ENCODE measurements at regions of chr17 and their contacts with region 1.

Region 1: DNA sequence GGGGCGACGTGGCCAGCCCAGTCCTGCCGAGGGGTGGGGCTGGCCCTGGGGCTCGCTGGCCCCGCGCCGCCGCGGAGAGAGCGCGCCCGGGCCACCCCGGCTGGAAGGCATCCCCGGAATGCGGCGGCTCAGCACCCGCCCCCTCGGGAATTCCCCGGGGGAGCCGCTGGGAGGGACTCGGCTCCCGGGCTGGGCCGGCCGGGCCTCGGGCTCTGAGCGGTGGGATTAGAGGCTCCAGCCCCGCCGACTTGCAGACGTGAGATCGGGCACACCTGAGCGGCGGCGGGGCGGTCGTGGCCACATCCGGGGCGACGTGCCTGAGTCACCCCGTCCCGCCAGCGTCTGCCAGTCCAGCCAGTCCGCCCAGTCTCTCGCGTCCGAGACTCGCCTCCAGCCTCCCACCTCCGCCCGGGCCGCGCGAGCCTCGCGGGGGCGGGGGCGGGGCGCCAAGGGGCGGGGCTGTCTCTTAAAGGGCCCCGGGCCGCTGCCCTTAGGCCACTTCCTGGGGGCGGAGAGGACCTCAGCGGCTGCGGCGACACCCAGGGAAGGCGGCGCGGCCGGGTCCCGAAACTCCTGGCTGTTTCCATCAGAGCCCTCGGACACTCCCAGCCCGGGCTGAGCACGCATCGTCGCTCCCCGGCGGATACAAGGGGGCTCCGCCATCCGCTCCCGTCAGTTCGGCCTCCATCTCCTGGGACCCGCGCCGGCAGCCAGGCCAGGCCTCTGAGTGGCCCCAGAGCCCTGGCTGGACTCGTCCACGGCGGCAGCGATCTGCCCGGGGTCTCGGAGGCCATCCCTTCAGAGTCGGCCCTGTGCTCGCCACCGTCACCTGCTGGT is at the start of gene KCTD11:
- DNase-seq: peak; percentile 94
- H3K4me3 ChIP-seq: peak within 1 kb of the TSS; percentile 58 to 88 (median 74)
- H3K27ac ChIP-seq: peak within 1 kb of the TSS; percentile 86 to 94 (median 91)
- H3K4me1 ChIP-seq: peaks cover 32 to 92% (median 59%) of the 10 kb centered on the region in 6 donors
- H3K27me3 ChIP-seq: no peaks in the 10 kb centered on the region
- CTCF ChIP-seq: peak in 2 of 11 experiments; percentile 11 to 15
- POLR2A ChIP-seq: peak in 1 of 3 donors; percentile 6
- total RNA-seq, gene KCTD11: 7.7 to 10.0 (median 9.1) TPM

Region 2: GRCh38 chr17:7296189-7296902 is 55.5 kb before region 1 on chr17:
- intact Hi-C with region 1: loop called (anchors 10 kb)
- DNase-seq: peak; percentile 94
- H3K4me3 ChIP-seq: peak overlapping the region in 2 of 8 donors; percentile 37 to 52
- H3K27ac ChIP-seq: peak overlapping the region in 1 of 8 donors; percentile 7
- H3K4me1 ChIP-seq: peaks cover 17 to 40% (median 33%) of the 10 kb centered on the region in 6 donors
- H3K27me3 ChIP-seq: peaks cover 0 to 60% (median 38%) of the 10 kb centered on the region in 7 donors
- CTCF ChIP-seq: peak; percentile 62 to 96 (median 89)
- POLR2A ChIP-seq: no peak

Region 3: GRCh38 chr17:7435221-7435675 is 83.4 kb after region 1 on chr17 and contains the start of gene TMEM102:
- intact Hi-C with region 1: loop called (anchors 5 kb)
- DNase-seq: peak; percentile 97
- H3K4me3 ChIP-seq: peak within 1 kb of the TSS; percentile 62 to 84 (median 72)
- H3K27ac ChIP-seq: peak within 1 kb of the TSS; percentile 78 to 93 (median 87)
- H3K4me1 ChIP-seq: peaks cover 25 to 56% (median 50%) of the 10 kb centered on the region in 6 donors
- H3K27me3 ChIP-seq: peaks cover 0 to 31% (median 20%) of the 10 kb centered on the region in 7 donors
- CTCF ChIP-seq: no peak
- POLR2A ChIP-seq: peak in 2 of 3 donors; percentile 14 to 21
- total RNA-seq, gene TMEM102: 7.1 to 17.4 (median 10.9) TPM

Region 4: DNA sequence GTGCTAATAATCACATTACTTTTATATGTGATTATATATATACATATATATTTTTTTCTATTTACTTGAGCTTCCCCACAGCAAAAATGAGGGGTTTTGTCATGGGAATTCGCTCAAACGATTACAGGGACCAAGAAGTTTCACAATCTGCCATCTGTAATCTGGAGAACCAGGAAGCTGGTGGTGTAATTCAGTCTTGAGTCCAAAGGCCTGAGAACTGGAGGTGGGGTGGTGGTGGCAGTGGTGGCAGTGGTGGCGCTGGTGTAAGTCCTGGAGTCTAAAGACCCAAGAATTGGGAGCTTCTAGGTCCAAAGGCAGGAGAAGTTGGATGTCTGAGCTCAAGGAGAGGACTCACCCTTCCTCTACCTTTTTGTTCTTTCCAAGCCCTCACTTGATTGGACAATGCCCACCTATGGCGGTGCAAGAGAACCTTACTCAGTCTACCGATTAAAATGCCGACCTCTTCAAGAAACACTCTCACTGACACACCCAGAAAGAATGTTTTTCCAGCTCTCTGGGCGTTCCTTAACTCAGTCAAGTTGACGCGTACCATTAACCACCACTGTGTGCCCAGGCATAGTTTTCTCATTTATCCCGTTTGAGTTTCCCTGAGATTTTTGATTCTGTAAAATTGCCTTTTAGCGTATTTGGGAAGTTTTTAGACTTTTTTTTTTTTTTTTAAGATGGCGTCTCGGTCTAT is 164.2 kb after region 1 on chr17:
- intact Hi-C with region 1: loop called (anchors 10 kb)
- DNase-seq: no peak
- H3K4me3 ChIP-seq: no peak overlapping the region
- H3K27ac ChIP-seq: peak overlapping the region in 3 of 8 donors; percentile 27 to 56 (median 28)
- H3K4me1 ChIP-seq: peaks cover 0 to 21% (median 8%) of the 10 kb centered on the region in 6 donors
- H3K27me3 ChIP-seq: no peaks in the 10 kb centered on the region
- CTCF ChIP-seq: no peak
- POLR2A ChIP-seq: no peak

Region 5: DNA sequence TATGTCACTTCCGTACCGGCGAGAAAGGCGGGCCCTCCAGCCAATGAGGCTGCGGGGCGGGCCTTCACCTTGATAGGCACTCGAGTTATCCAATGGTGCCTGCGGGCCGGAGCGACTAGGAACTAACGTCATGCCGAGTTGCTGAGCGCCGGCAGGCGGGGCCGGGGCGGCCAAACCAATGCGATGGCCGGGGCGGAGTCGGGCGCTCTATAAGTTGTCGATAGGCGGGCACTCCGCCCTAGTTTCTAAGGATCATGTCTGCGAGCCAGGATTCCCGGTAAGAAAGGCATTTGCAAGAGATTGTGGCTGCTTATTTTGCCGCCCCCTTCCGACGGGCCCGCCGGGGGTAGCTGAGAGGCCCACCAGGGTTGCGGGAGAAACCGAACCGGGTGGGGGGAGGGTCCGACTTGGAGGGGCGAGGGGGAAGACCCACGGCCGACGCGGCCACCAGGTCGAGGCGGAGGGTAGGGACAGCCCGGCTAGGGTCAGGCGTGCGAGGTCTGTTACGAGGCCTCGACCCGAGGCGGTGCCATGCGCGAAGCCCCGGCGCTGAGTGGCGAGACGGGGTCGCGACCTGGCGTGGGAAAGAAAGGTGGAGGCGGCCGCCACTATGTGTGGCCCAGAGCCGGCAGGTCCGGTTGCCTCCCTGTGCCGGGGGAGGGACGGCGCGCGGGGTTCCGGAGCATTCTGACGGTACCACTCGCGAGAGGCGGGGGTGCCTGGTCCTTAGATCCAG is 220.9 kb after region 1 on chr17:
- intact Hi-C with region 1: loop called (anchors 10 kb)
- DNase-seq: peak; percentile 99
- H3K4me3 ChIP-seq: peak overlapping the region; percentile 91 to 100 (median 98)
- H3K27ac ChIP-seq: peak overlapping the region; percentile 98 to 100 (median 99)
- H3K4me1 ChIP-seq: peaks cover 22 to 58% (median 53%) of the 10 kb centered on the region in 6 donors
- H3K27me3 ChIP-seq: no peaks in the 10 kb centered on the region
- CTCF ChIP-seq: peak in 7 of 11 experiments; percentile 13 to 40 (median 22)
- POLR2A ChIP-seq: peak; percentile 96 to 98 (median 98)